ENCODE measurements at regions of chr7 and their contacts with region 1.

Region 1: GRCh38 chr7:6375348-6376101 is 72.2 kb downstream of the DAGLB start:
- DNase-seq: peak; percentile 21
- ATAC-seq: no peak
- H3K4me3 Mint-ChIP-seq: peak overlapping the region; percentile 79
- H3K27ac Mint-ChIP-seq: peak overlapping the region; percentile 88
- H3K4me1 Mint-ChIP-seq: peaks cover 42% of the 10 kb centered on the region
- H3K27me3 Mint-ChIP-seq: no peaks in the 10 kb centered on the region
- CTCF ChIP-seq: no peak

Region 2: DNA sequence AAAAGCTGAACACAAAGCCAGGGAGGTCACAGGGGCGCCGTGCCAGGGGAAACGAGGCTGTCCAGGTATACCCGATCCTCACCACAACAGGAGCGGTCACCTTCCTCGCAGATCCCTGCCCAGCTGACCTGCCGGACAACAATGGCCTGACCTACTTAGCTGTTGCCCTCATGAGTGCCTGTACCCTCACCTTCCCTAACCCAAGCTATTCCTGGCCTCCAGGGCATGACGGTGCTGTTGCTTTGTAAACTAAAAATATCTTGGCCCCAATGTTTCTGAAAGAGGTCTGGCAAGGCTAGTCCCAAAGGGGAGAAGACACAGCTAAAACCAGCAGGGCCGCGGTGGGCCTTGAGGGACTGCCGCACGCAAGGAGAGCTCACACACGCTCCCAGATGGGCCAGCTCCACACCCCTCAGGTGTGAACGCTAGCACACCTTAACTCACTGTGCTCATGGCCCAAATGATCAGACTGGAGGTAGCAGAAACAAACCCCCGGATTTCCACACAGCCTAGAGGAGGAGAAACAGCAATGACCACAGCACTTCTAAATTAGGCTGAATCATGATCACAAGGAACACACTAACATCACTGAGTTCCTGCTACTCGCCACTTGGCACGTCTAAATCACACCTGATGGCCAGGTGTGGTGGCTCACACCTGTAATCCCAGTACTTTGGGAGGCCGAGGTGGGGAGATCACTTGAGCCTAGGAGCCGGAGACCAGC is 36.8 kb before region 1 on chr7:
- CTCF ChIA-PET with region 1: no interaction called
- POLR2A ChIA-PET with region 1: interaction called, 12 read pairs
- intact Hi-C with region 1: no loop called
- DNase-seq: no peak
- ATAC-seq: no peak
- H3K4me3 Mint-ChIP-seq: no peak overlapping the region
- H3K27ac Mint-ChIP-seq: no peak overlapping the region
- H3K4me1 Mint-ChIP-seq: peaks cover 10% of the 10 kb centered on the region
- H3K27me3 Mint-ChIP-seq: no peaks in the 10 kb centered on the region
- CTCF ChIP-seq: no peak

Region 3: DNA sequence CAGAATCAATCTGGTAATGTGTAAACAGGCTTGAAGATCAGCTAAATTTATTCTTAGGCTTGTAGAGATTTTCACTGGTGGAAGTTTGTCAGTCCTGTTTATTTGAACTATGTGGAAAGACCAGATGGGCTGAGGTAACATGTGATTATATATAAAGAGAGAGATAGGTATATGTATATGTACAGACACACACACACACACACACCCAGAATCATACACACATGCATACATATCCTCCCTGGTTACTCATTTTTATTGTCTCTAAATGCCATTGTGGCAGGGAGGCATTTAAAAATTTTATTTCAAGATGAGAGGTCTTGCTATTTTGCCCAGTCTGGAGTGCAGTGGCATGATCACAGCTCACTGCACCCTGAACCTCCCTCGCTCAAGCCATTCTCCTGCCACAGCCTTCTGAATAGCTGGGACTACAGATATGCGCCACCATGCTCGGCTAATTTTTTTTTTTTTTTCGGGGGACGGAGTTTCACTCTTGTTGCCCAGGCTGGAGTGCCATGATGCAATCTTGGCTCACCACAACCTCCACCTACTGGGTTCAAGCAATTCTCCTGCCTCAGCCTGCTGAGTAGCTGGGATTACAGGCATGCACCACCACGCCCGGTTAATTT is 25.0 kb before region 1 on chr7:
- CTCF ChIA-PET with region 1: no interaction called
- POLR2A ChIA-PET with region 1: interaction called, 10 read pairs
- intact Hi-C with region 1: no loop called
- DNase-seq: no peak
- ATAC-seq: no peak
- H3K4me3 Mint-ChIP-seq: no peak overlapping the region
- H3K27ac Mint-ChIP-seq: peak overlapping the region; percentile 65
- H3K4me1 Mint-ChIP-seq: peaks cover 22% of the 10 kb centered on the region
- H3K27me3 Mint-ChIP-seq: no peaks in the 10 kb centered on the region
- CTCF ChIP-seq: no peak

Region 4: DNA sequence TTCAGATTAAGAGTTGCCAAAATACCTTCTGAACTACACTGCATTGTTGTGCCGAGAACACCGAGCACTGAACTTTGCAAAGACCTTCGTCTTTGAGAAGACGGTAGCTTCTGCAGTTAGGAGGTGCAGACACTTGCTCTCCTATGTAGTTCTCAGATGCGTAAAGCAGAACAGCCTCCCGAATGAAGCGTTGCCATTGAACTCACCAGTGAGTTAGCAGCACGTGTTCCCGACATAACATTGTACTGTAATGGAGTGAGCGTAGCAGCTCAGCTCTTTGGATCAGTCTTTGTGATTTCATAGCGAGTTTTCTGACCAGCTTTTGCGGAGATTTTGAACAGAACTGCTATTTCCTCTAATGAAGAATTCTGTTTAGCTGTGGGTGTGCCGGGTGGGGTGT is 27.2 kb after region 1 on chr7:
- CTCF ChIA-PET with region 1: no interaction called
- POLR2A ChIA-PET with region 1: no interaction called
- intact Hi-C with region 1: no loop called
- DNase-seq: no peak
- ATAC-seq: no peak
- H3K4me3 Mint-ChIP-seq: no peak overlapping the region
- H3K27ac Mint-ChIP-seq: no peak overlapping the region
- H3K4me1 Mint-ChIP-seq: no peaks in the 10 kb centered on the region
- H3K27me3 Mint-ChIP-seq: no peaks in the 10 kb centered on the region
- CTCF ChIP-seq: no peak

Region 5: DNA sequence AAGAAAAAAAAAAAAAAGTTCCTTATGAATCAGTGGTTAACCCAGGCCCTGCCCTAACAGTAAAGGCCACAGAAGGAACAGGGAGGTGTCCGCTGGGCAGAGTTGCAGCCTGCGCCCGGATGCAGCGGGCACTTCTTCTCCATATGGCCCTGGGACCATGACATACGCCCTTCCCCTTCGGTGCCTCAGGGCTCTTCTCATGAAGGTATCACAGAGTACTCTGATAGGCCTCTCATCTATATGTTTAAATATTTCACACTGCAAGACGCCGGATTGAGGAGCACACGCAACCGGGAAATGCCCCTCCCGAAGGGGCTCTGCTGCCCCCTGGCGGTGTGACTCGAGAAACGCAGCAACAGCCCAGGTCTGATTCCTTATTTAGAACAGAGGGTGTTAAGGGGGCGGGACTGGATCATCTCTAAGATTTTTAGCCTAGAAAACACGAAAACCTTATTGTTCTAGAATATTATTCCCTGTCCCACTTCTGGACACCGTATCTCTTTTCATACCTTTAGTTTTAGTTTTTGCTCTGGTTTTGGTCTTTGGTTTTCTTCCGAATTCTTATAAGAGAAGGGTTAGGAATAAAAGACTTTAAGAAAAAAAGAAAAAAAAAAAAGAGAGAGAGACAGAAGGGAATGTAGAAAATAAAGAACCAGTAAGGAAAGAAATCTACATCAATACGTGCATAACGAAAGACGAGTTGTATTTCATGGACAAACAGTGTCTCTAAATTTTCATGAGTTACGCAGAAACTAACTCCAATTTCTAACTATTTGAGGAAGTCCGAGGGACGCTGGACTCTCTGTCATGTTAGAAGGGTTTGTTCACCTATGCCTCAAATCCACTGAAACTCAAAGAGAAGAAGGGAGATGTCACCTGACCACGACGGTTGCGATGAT is 60.2 kb after region 1 on chr7:
- CTCF ChIA-PET with region 1: no interaction called
- POLR2A ChIA-PET with region 1: interaction called, 5 read pairs
- intact Hi-C with region 1: loop called (anchors 1 kb)
- DNase-seq: peak; percentile 83
- ATAC-seq: peak; percentile 92
- H3K4me3 Mint-ChIP-seq: peak overlapping the region; percentile 76
- H3K27ac Mint-ChIP-seq: peak overlapping the region; percentile 76
- H3K4me1 Mint-ChIP-seq: peaks cover 43% of the 10 kb centered on the region
- H3K27me3 Mint-ChIP-seq: no peaks in the 10 kb centered on the region
- CTCF ChIP-seq: peak; percentile 65